ENCODE measurements at regions of chr19 and their contacts with region 1.

Region 1: DNA sequence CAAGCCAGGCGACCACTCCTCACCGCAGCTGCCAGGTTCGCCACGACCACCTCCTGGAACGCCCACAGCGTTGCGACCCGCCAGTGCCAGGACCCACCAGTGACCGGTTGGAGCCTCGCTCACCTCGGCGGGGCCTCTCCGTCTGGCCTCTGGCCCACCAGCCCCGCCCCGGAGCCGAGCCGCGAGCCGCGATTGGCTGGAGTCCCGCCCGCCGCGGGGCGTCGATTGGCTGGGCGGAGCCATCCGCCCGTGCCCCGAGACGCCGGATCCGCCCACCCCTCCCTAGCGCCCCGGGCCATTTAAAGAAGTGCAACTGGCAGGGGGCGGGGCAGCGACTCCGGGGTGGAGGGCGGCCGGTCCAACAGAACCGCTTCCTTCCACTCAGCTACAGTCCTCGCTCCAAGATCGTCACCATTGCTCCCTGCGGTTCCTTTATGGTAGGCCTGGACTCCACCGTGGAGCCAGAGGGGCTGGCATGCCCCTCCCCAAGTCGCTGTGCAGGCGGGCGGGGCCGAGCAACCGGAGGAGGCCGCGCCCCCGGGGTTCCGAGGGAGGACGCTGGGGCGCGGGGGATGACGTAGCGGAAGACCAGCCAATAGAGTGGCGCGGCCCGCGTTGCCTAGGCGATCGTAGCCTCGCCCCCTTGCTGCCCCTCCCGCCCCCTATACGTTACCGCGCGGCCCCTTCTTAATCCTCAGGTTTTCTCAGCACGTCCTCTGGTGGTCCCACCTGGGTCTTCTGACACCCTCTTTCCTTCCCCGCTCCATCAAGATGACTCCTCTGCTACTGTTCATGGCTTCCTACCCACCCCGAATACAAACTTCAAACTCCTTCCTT is at the start of gene SERTAD3:
- DNase-seq: peak; percentile 98 to 99
- ATAC-seq: peak; percentile 94
- H3K4me3 ChIP-seq: peak within 1 kb of the TSS; percentile 50 to 90
- H3K27ac ChIP-seq: peak within 1 kb of the TSS; percentile 51 to 88
- H3K4me1 ChIP-seq: no peaks in the 10 kb centered on the region
- H3K27me3 ChIP-seq: no peaks in the 10 kb centered on the region
- total RNA-seq, gene SERTAD3: 34.8 to 46.3 TPM

Region 2: GRCh38 chr19:40348125-40348913 is 96.1 kb before region 1 on chr19 and contains the starts of genes C19orf47 and PLD3:
- intact Hi-C with region 1: loop called in 1 of 2 experiments (anchors 1 kb)
- DNase-seq: peak; percentile 100
- ATAC-seq: peak; percentile 99
- H3K4me3 ChIP-seq: peak within 1 kb of the TSS; percentile 50 to 74
- H3K27ac ChIP-seq: peak within 1 kb of the TSS in 1 of 2 donors; percentile 49
- H3K4me1 ChIP-seq: peaks cover 0 to 4% of the 10 kb centered on the region in 2 donors
- H3K27me3 ChIP-seq: no peaks in the 10 kb centered on the region
- total RNA-seq, gene C19orf47: 16.9 to 22.3 TPM
- total RNA-seq, gene PLD3: 184 to 291 TPM

Region 3: DNA sequence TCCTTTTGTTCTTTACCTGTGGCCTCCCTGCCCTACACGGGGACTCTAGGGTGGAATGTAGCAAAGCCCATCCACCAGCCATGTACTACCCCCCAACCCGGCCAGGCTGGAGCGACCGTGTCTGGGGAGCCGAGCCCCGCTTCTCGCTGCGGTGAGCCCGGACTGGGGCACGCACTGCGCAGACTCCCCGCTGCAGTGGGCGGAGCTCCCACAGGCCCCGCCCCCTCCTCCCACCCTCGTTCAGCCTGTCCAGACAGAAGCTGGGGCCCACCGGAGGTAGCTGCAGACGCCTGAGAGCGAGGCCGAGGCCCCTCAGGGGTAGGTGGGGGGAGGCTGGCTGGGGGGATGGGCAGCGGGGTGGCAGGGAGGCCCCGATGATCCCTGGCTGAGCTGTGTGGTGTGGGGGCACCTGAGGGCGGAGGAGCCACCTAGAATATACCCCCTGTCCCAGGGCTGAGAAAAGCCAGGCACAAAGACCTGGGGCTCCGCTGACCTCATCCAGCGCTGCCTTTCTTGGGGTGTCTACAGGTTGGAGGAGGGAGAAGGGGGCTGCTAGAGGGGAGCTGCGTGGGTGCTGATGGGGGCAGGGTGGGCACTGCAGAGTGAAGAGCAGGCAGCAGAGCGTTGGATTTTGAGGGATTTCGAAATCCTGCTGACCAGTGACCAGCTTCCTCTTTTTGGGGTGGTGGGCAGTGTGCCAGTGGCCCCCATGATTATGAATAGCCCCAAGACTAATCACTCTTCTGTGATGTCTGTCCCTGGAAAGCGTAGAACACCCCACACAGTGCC is 78.6 kb before region 1 on chr19:
- intact Hi-C with region 1: no loop called
- DNase-seq: peak; percentile 83 to 90
- ATAC-seq: peak; percentile 68
- H3K4me3 ChIP-seq: no peak overlapping the region
- H3K27ac ChIP-seq: no peak overlapping the region
- H3K4me1 ChIP-seq: no peaks in the 10 kb centered on the region
- H3K27me3 ChIP-seq: no peaks in the 10 kb centered on the region

Region 4: DNA sequence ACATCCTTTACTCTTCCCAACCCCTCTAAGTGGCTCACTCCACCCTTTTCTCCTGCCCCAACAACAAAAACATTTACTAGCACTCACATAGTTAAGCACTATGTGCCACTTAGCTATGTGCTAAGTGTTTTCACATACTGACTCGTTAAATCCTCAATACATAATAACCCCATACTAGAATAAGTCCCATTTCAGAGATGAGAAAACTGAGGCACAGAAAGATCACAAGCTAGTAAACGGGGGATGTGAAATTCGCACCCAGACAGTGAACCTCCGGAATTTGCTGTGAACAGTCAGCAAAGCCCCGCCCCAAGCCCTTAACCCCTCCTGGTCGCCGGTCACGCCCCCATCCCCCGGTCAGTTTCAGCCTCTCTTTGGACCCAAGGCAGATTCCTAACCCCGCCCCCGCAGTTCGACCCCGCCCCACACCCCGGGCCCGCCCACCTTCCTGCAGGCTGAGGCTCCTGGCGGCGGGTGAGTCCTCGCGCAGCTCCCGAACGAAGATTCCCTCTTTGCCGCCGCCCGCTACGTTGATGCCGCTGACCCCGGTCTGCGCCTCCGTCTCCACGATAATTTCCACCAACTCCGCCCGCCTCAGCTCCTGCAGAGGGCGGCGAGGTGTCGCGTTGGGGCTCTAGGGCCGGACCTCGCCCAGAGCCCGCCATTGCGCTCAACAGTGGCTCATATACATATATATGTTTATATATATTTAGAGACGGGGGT is 41.0 kb before region 1 on chr19:
- intact Hi-C with region 1: loop called in 1 of 2 experiments (anchors 2 kb)
- DNase-seq: peak; percentile 96 to 98
- ATAC-seq: peak; percentile 94
- H3K4me3 ChIP-seq: peak overlapping the region; percentile 39 to 44
- H3K27ac ChIP-seq: peak overlapping the region in 1 of 2 donors; percentile 69
- H3K4me1 ChIP-seq: no peaks in the 10 kb centered on the region
- H3K27me3 ChIP-seq: no peaks in the 10 kb centered on the region

Region 5: DNA sequence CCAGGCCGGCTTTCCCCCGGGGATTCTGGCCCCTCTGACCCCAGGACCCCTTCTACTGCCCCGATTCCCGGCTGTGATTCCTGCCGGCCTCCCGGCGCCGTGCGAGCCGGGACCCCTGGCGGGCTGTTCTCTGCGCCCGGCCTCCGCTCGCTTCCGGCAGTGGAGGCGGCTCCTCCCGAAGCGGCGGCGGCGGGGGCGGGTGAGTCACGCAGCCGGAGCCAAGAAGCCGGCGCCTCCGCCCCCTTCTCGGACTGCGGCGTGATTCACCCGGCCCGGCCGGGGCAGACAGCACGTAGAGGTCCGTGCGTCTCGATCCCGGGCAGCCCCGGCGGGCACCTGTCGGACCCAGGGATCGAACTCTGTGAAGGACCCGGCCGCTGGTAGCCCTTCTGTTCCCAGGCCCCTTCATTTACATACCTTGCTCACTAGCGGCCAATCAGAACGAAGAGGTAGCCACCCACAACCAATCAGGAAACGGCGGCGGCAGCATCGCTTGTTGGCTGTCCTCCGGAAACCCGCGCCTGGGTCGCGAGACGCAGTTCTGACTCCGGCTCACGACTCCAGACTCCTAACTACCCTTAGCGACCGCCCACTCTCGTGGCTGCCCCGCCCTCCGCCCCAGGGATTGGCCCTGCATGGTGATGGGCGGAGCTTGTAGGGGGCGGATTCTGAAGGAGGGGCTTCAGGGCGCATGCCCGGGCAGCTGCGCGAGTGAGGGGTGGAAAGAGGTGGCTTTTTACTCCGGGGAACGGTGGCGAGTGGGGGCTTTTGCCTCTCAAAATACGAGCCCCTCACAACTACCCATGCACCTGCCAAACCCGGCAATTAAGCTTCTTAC is 18.7 kb before region 1 on chr19 and contains the start of gene SERTAD1:
- intact Hi-C with region 1: loop called in 1 of 2 experiments (anchors 1 kb)
- DNase-seq: peak; percentile 99 to 100
- ATAC-seq: peak; percentile 96
- H3K4me3 ChIP-seq: peak within 1 kb of the TSS; percentile 74 to 88
- H3K27ac ChIP-seq: peak within 1 kb of the TSS; percentile 99 to 100
- H3K4me1 ChIP-seq: no peaks in the 10 kb centered on the region
- H3K27me3 ChIP-seq: no peaks in the 10 kb centered on the region
- total RNA-seq, gene SERTAD1: 19.7 to 27.8 TPM

Region 6: DNA sequence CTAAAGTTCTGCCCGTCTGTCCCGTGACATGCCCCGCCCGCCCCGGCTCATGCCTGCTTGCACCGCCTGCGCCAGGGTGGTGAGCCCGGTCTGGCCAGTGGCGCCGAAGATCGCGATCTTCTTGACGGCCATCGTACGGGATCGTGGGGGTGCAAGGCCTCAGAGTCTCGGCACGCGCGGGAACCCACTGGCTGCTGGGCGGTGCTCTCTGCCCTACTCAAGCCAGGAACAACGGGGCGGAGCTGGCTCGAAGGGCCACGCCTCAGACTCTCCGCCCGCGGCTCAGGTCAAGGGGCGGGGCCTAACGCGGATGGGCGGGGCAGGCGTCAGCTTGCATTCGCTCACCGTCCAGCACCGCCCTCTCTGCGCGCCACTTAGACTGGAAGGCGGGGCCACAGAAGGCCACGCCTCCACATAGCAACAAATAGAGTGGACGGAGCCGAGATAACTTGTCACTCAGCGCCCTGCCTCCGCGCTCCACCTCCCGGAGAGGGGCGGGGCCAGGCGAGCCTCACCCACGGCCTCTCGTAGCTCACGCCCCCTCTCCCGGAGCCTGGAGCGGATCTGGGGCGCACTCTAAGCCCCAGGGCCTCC is 21.2 kb after region 1 on chr19 and contains the start of gene BLVRB:
- intact Hi-C with region 1: loop called in 1 of 2 experiments (anchors 2 kb)
- DNase-seq: peak; percentile 100
- ATAC-seq: peak; percentile 98
- H3K4me3 ChIP-seq: peak within 1 kb of the TSS; percentile 46 to 57
- H3K27ac ChIP-seq: peak within 1 kb of the TSS; percentile 52 to 56
- H3K4me1 ChIP-seq: peaks cover 0 to 3% of the 10 kb centered on the region in 2 donors
- H3K27me3 ChIP-seq: no peaks in the 10 kb centered on the region
- total RNA-seq, gene BLVRB: 72.3 to 77.1 TPM

Region 7: DNA sequence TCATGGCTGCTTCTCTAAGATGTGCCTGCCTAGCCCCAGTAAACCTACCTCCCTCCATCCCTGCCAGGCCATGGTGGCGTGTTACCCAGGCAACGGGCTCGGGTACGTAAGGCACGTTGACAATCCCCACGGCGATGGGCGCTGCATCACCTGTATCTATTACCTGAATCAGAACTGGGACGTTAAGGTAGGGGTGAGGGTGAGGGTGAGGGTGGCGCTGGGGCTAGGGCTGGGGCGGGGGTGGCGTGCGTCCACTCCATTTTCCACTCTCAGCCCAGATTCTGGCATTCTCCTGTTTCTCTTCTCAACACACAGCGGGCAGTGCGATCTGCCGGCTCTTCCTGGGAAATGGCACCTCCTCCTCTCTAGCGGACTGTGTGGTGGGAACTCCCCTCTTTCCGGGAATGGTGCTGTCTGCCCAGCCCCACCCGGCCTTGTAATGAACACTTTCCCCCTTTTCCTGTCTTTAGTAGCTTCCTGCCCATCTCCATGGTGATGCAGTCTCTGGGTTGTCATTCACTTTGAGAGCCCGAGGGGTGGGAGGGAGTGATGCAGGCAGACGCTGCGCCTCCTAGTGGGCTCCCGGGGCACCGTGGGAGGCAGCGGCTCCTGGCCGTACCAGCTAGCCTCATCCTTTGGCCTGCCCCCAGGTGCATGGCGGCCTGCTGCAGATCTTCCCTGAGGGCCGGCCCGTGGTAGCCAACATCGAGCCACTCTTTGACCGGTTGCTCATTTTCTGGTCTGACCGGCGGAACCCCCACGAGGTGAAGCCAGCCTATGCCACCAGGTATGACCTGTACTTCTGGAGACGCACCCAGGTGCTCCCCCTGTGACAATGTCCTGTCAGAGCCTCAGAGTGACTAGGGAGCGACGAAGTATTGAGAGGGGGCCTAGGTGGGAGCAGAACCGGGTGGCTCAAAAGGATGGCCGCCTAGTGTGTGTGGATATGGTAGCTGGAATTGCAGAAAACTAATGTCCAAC is 362.4 kb after region 1 on chr19:
- intact Hi-C with region 1: loop called in 1 of 2 experiments (anchors 10 kb)
- DNase-seq: peak; percentile 85 to 93
- ATAC-seq: peak; percentile 62
- H3K4me3 ChIP-seq: no peak overlapping the region
- H3K27ac ChIP-seq: peak overlapping the region in 1 of 2 donors; percentile 32
- H3K4me1 ChIP-seq: no peaks in the 10 kb centered on the region
- H3K27me3 ChIP-seq: no peaks in the 10 kb centered on the region

Measured in aorta (tissue), 5 donors.